ENCODE measurements at regions of chr2 and their contacts with region 1.

Region 1: GRCh38 chr2:179428649-179429048 is 164.0 kb upstream of the SESTD1 start:
- DNase-seq: no peak
- H3K4me3 ChIP-seq: no peak overlapping the region
- H3K27ac ChIP-seq: no peak overlapping the region
- H3K4me1 ChIP-seq: peaks cover 11% of the 10 kb centered on the region
- H3K27me3 ChIP-seq: no peaks in the 10 kb centered on the region
- CTCF ChIP-seq: no peak
- POLR2A ChIP-seq: no peak

Region 2: GRCh38 chr2:179201869-179202268 is 226.8 kb before region 1 on chr2:
- intact Hi-C with region 1: no loop called
- DNase-seq: no peak
- H3K4me3 ChIP-seq: no peak overlapping the region
- H3K27ac ChIP-seq: no peak overlapping the region
- H3K4me1 ChIP-seq: no peaks in the 10 kb centered on the region
- H3K27me3 ChIP-seq: no peaks in the 10 kb centered on the region
- CTCF ChIP-seq: no peak
- POLR2A ChIP-seq: no peak

Region 3: DNA sequence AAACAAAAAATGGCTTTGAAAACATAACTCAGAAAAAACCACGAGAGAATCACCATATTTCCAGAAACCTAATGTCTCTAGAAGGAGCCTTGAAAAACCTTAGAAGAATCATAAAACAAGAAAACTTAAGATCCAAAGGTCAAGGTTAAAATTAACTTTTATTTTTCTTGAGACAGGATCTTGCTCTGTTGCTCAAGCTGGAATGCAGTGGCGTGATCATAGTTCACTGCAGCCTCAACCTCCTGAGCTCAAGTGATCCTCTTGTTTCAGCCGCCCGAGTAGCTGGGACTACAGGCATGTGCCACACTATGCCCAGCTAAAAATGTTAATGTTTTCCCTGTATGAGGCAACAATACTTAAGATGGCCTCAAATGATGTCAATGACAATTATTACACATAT is 90.2 kb after region 1 on chr2:
- intact Hi-C with region 1: no loop called
- DNase-seq: no peak
- H3K4me3 ChIP-seq: no peak overlapping the region
- H3K27ac ChIP-seq: no peak overlapping the region
- H3K4me1 ChIP-seq: no peaks in the 10 kb centered on the region
- H3K27me3 ChIP-seq: no peaks in the 10 kb centered on the region
- CTCF ChIP-seq: no peak
- POLR2A ChIP-seq: no peak

Region 4: GRCh38 chr2:179751163-179751809 is 322.6 kb after region 1 on chr2:
- intact Hi-C with region 1: loop called (anchors 5 kb)
- DNase-seq: no peak
- H3K4me3 ChIP-seq: no peak overlapping the region
- H3K27ac ChIP-seq: no peak overlapping the region
- H3K4me1 ChIP-seq: no peaks in the 10 kb centered on the region
- H3K27me3 ChIP-seq: no peaks in the 10 kb centered on the region
- CTCF ChIP-seq: peak in 2 of 3 experiments; percentile 11 to 48
- POLR2A ChIP-seq: no peak

Measured in vagina (tissue), 2 donors.